Activated naive CD8-positive, alpha-beta T cell treated with anti-CD3 and anti-CD28 coated beads, Interleukin-2, amount 10 ng/mL, durations not matched to agents 7 days and 5 days (primary cell): ENCODE measurements at regions of chr22 and their contacts with region 1.

Region 1: GRCh38 chr22:19909350-19910179 is 32.0 kb upstream of the COMT start:
- DNase-seq: peak; percentile 84
- ATAC-seq: peak; percentile 87
- H3K4me3 Mint-ChIP-seq: no peak overlapping the region
- H3K27ac Mint-ChIP-seq: peak overlapping the region; percentile 69
- H3K4me1 Mint-ChIP-seq: peaks cover 5% of the 10 kb centered on the region
- H3K27me3 Mint-ChIP-seq: no peaks in the 10 kb centered on the region

Region 2: GRCh38 chr22:19730655-19731360 is 178.8 kb before region 1 on chr22:
- POLR2A ChIA-PET with region 1: interaction called, 11 read pairs
- DNase-seq: peak; percentile 94
- ATAC-seq: peak; percentile 91
- H3K4me3 Mint-ChIP-seq: peak overlapping the region; percentile 85
- H3K27ac Mint-ChIP-seq: no peak overlapping the region
- H3K4me1 Mint-ChIP-seq: peaks cover 2% of the 10 kb centered on the region
- H3K27me3 Mint-ChIP-seq: peaks cover 1% of the 10 kb centered on the region

Region 3: GRCh38 chr22:19986410-19987341 is 77.1 kb after region 1 on chr22:
- POLR2A ChIA-PET with region 1: no interaction called
- DNase-seq: peak; percentile 83
- ATAC-seq: peak; percentile 83
- H3K4me3 Mint-ChIP-seq: peak overlapping the region; percentile 28
- H3K27ac Mint-ChIP-seq: no peak overlapping the region
- H3K4me1 Mint-ChIP-seq: no peaks in the 10 kb centered on the region
- H3K27me3 Mint-ChIP-seq: peaks cover 4% of the 10 kb centered on the region